ENCODE measurements at regions of chr11 and their contacts with region 1.

Region 1: GRCh38 chr11:134139873-134140331 is 71.0 kb downstream of the JAM3 start:
- DNase-seq: peak; percentile 63 to 92 (median 80)
- H3K4me3 ChIP-seq: no peak overlapping the region
- H3K27ac ChIP-seq: peak overlapping the region in 2 of 5 donors; percentile 38 to 74
- H3K4me1 ChIP-seq: peaks cover 0 to 9% of the 10 kb centered on the region in 2 donors
- H3K27me3 ChIP-seq: no peaks in the 10 kb centered on the region
- CTCF ChIP-seq: peak; percentile 83 to 95 (median 93)
- POLR2A ChIP-seq: no peak

Region 2: DNA sequence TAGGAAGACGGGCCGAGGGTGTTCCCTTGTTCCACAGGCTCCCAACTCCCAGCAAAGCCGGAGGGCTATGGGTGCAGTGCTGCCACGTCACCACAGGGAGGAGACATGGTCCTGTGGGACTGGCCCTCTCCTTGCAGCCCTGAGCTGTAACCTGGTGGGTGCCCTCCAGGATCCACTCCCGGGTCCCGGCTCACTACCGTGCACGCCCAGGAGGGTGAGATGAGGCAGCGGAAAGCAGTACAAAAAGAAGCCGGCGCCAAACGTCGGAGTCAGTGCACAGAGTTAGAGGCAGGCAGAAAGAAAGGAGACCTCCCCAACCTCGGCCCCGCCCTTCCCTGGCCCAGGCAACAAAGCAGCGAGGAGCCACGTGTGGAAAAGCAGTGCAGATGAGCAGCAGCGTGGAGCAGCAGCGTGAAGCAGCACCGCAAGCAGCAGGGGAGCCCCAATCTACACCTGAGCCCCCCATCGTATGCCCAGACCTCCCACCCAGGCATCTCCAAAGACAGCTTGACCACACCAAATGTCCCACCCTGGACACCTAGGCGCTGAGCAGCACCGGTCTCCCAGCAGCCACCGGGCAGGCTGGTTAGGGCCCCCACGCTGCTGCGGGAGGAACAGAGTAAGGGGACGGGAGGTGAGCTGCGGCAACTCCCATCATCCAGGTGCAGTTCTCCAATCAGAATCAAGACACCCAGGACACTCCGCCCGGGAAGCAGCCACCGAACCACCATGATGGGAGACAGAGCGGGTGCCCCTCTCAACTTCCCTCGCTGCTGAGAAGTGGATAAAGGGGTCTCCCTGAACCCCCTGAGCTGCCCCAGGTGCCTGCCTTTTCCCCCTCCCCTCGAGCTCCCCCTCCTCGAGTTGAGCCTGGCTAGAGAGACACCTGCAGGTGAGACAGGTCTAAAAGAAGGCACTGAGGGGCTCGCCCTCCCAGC is 211.9 kb before region 1 on chr11:
- intact Hi-C with region 1: loop called (anchors 5 to 10 kb)
- DNase-seq: peak; percentile 47 to 88 (median 68)
- H3K4me3 ChIP-seq: no peak overlapping the region
- H3K27ac ChIP-seq: no peak overlapping the region
- H3K4me1 ChIP-seq: peaks cover 0 to 8% of the 10 kb centered on the region in 2 donors
- H3K27me3 ChIP-seq: peaks cover 12% of the 10 kb centered on the region
- CTCF ChIP-seq: peak; percentile 52 to 84 (median 73)
- POLR2A ChIP-seq: no peak

Region 3: GRCh38 chr11:133934599-133935550 is 205.0 kb before region 1 on chr11:
- intact Hi-C with region 1: loop called in 1 of 2 experiments (anchors 10 kb)
- DNase-seq: peak in 1 of 7 donors; percentile 82
- H3K4me3 ChIP-seq: no peak overlapping the region
- H3K27ac ChIP-seq: no peak overlapping the region
- H3K4me1 ChIP-seq: no peaks in the 10 kb centered on the region
- H3K27me3 ChIP-seq: peaks cover 6% of the 10 kb centered on the region
- CTCF ChIP-seq: peak in 1 of 6 experiments; percentile 9
- POLR2A ChIP-seq: no peak

Region 4: DNA sequence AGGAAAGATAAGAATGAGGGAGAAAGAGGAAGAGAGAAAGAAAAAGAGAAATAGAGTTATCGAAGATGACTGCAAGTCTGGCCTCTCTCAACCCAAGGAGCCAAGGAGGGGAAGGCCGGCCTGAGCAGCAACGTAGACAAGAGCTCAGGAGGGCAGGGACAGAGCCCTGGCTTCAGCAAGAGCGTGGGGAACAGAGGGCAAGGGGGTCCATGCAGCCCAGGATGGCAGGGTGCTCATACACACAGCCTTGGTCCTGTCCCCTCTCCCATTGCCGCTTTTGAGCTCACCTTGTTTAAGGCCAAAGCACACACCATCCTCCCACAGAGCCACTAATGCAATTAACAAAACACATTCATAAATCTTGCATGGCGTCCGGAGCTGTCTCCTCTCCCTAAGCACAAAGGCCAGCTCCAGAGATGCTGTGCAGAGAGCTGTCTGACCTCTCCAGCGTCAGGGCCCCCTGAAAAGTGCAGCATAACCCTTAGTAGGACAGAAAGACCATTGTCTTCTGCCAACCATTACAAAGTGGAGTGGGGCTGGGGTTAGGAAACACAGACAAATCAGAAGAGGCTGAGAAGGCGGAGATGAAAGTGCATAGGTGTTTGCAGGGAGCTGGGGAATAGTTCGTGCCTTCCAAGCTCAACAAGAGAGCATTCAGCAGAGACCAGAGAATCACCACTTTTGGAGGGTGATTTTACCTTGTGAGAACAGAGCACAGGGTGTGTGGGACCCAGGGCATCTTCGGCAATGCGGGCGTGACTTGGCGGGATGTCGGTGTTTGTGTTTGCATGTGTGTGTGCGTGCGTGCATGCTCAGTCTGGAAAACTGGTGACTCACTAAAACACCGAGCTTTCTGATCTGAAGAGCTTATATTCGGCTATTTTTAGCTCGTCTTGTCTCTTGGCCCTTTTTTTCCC is 99.3 kb before region 1 on chr11:
- intact Hi-C with region 1: loop called in 1 of 2 experiments (anchors 5 kb)
- DNase-seq: peak in 2 of 7 donors; percentile 73 to 78
- H3K4me3 ChIP-seq: no peak overlapping the region
- H3K27ac ChIP-seq: peak overlapping the region in 1 of 5 donors; percentile 66
- H3K4me1 ChIP-seq: peaks cover 0 to 13% of the 10 kb centered on the region in 2 donors
- H3K27me3 ChIP-seq: no peaks in the 10 kb centered on the region
- CTCF ChIP-seq: no peak
- POLR2A ChIP-seq: no peak

Region 5: GRCh38 chr11:134050541-134051383 is 89.1 kb before region 1 on chr11:
- intact Hi-C with region 1: loop called in 1 of 2 experiments (anchors 2 kb)
- DNase-seq: peak; percentile 80 to 89 (median 84)
- H3K4me3 ChIP-seq: peak overlapping the region in 2 of 4 donors; percentile 2 to 50
- H3K27ac ChIP-seq: peak overlapping the region in 4 of 5 donors; percentile 25 to 91 (median 81)
- H3K4me1 ChIP-seq: no peaks in the 10 kb centered on the region
- H3K27me3 ChIP-seq: no peaks in the 10 kb centered on the region
- CTCF ChIP-seq: peak; percentile 87 to 98 (median 96)
- POLR2A ChIP-seq: peak in 1 of 2 donors; percentile 55

Measured in adrenal gland (tissue), 19 donors.